Endothelial cell of umbilical vein (primary cell): ENCODE measurements at regions of chr2 and their contacts with region 1.

Region 1: GRCh38 chr2:133171393-133172004 is 396.8 kb downstream of the NCKAP5 start:
- DNase-seq: peak; percentile 79
- H3K4me3 ChIP-seq: no peak overlapping the region
- H3K27ac ChIP-seq: no peak overlapping the region
- H3K4me1 ChIP-seq: no peaks in the 10 kb centered on the region
- H3K27me3 ChIP-seq: peaks cover 2% of the 10 kb centered on the region in 2 experiments
- CTCF ChIP-seq: peak; percentile 48 to 58
- POLR2A ChIP-seq: no peak

Region 2: GRCh38 chr2:132547074-132547687 is 624.3 kb before region 1 on chr2:
- CTCF ChIA-PET with region 1: interaction called, 221 read pairs
- POLR2A ChIA-PET with region 1: no interaction called
- dilution Hi-C with region 1: no loop called
- intact Hi-C with region 1: loop called (anchors 1 kb)
- DNase-seq: peak; percentile 56
- H3K4me3 ChIP-seq: no peak overlapping the region
- H3K27ac ChIP-seq: no peak overlapping the region
- H3K4me1 ChIP-seq: no peaks in the 10 kb centered on the region
- H3K27me3 ChIP-seq: no peaks in the 10 kb centered on the region
- CTCF ChIP-seq: peak; percentile 53 to 58
- POLR2A ChIP-seq: no peak

Region 3: GRCh38 chr2:132670496-132671150 is 500.9 kb before region 1 on chr2:
- CTCF ChIA-PET with region 1: interaction called, 23 read pairs
- POLR2A ChIA-PET with region 1: no interaction called
- dilution Hi-C with region 1: no loop called
- intact Hi-C with region 1: loop called (anchors 1 kb)
- DNase-seq: peak; percentile 44
- H3K4me3 ChIP-seq: peak overlapping the region; percentile 55 to 76 (median 75)
- H3K27ac ChIP-seq: peak overlapping the region; percentile 69
- H3K4me1 ChIP-seq: peaks cover 30% of the 10 kb centered on the region
- H3K27me3 ChIP-seq: no peaks in the 10 kb centered on the region
- CTCF ChIP-seq: no peak
- POLR2A ChIP-seq: peak; percentile 54

Region 4: GRCh38 chr2:133097666-133098065 is 73.8 kb before region 1 on chr2:
- CTCF ChIA-PET with region 1: no interaction called
- POLR2A ChIA-PET with region 1: no interaction called
- dilution Hi-C with region 1: no loop called
- intact Hi-C with region 1: no loop called
- DNase-seq: no peak
- H3K4me3 ChIP-seq: no peak overlapping the region
- H3K27ac ChIP-seq: no peak overlapping the region
- H3K4me1 ChIP-seq: no peaks in the 10 kb centered on the region
- H3K27me3 ChIP-seq: no peaks in the 10 kb centered on the region
- CTCF ChIP-seq: no peak
- POLR2A ChIP-seq: no peak

Region 5: GRCh38 chr2:133193544-133194361 is 22.3 kb after region 1 on chr2:
- CTCF ChIA-PET with region 1: interaction called, 11 read pairs
- POLR2A ChIA-PET with region 1: no interaction called
- dilution Hi-C with region 1: no loop called
- intact Hi-C with region 1: no loop called
- DNase-seq: peak; percentile 38
- H3K4me3 ChIP-seq: no peak overlapping the region
- H3K27ac ChIP-seq: no peak overlapping the region
- H3K4me1 ChIP-seq: peaks cover 3% of the 10 kb centered on the region
- H3K27me3 ChIP-seq: no peaks in the 10 kb centered on the region
- CTCF ChIP-seq: no peak
- POLR2A ChIP-seq: no peak

Region 6: DNA sequence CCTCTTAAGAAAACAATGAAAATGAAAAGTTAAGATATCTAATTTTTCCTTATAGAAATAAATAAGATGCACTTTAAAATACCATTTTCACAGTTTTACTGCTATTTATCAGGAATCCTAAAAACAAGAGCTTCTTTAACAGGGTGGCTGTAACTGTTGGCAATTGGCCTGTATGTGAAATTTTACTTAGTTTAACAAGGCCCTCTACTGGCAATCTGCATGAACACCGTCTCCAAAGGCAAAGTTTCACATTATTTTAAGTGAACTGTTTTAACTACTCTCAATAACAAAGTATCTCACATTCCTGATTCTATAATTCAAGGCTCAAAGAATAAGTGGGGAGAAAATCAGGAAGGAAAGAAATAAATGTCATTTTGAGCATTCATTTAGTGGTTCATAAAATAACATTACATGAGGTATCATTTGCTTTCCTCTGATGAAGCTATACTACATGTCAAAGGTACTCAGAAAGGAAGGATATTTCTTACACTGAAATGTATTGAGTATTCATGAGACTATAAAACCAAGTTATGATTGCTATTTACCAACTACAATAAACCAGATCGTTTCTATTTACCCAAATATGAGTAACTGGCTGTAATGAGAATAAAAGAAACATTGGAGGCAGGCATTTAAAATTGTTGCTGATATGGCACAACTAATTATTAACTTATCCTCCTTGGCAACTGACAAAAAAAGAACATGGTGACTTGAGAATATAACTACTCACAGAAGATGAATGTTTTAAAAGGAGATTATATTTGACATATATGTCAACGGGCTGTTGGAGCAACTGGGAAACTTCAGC is 389.8 kb after region 1 on chr2:
- CTCF ChIA-PET with region 1: interaction called, 13 read pairs
- POLR2A ChIA-PET with region 1: no interaction called
- dilution Hi-C with region 1: no loop called
- intact Hi-C with region 1: loop called (anchors 2 kb)
- DNase-seq: peak; percentile 74
- H3K4me3 ChIP-seq: no peak overlapping the region
- H3K27ac ChIP-seq: no peak overlapping the region
- H3K4me1 ChIP-seq: no peaks in the 10 kb centered on the region
- H3K27me3 ChIP-seq: no peaks in the 10 kb centered on the region
- CTCF ChIP-seq: peak; percentile 38 to 52
- POLR2A ChIP-seq: no peak